ENCODE measurements at regions of chr14 and their contacts with region 1.

Region 1: GRCh38 chr14:73124180-73124894 is 12.0 kb upstream of the PSEN1 start:
- DNase-seq: no peak
- H3K4me3 Mint-ChIP-seq: no peak overlapping the region
- H3K27ac Mint-ChIP-seq: peak overlapping the region; percentile 6
- H3K4me1 Mint-ChIP-seq: no peaks in the 10 kb centered on the region
- H3K27me3 Mint-ChIP-seq: no peaks in the 10 kb centered on the region

Region 2: GRCh38 chr14:73091852-73092251 is 32.5 kb before region 1 on chr14:
- intact Hi-C with region 1: loop called (anchors 5 kb)
- DNase-seq: no peak
- H3K4me3 Mint-ChIP-seq: no peak overlapping the region
- H3K27ac Mint-ChIP-seq: no peak overlapping the region
- H3K4me1 Mint-ChIP-seq: peaks cover 6% of the 10 kb centered on the region
- H3K27me3 Mint-ChIP-seq: no peaks in the 10 kb centered on the region

Region 3: DNA sequence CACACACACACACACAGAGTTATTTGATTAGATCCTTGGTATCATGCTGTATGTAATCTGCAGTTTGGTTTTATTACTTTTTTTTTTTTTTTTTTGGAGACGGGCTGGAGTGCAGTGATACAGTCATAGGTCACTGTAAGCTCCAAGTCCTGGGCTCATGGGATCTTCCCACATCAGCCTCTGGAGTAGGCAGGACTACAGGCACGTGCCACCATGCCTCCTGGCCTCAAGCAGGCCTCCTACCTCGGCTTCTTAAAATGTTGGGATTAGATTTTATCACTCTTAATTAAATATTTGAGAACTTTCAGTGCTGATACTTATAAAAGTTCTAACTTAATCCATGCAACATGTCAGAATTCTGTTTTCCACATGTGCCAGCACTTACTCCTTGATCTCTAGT is 19.3 kb before region 1 on chr14:
- intact Hi-C with region 1: no loop called
- DNase-seq: peak; percentile 38
- H3K4me3 Mint-ChIP-seq: no peak overlapping the region
- H3K27ac Mint-ChIP-seq: no peak overlapping the region
- H3K4me1 Mint-ChIP-seq: no peaks in the 10 kb centered on the region
- H3K27me3 Mint-ChIP-seq: no peaks in the 10 kb centered on the region

Measured in activated CD4-positive, alpha-beta T cell treated with anti-CD3 and anti-CD28 coated beads, Interleukin-2, amount 10 ng/mL, durations not matched to agents 24 days and 14 days (primary cell).